PC-9 (cell line): ENCODE measurements at regions of chr2 and their contacts with region 1.

Region 1: GRCh38 chr2:177263451-177264208 is 897 bp downstream of the NFE2L2 start:
- DNase-seq: peak; percentile 97 to 100
- H3K4me3 ChIP-seq: peak overlapping the region; percentile 90
- H3K27ac ChIP-seq: peak overlapping the region; percentile 97
- H3K4me1 ChIP-seq: peaks cover 50% of the 10 kb centered on the region
- H3K27me3 ChIP-seq: no peaks in the 10 kb centered on the region
- CTCF ChIP-seq: peak; percentile 92

Region 2: GRCh38 chr2:176582990-176583481 is 680.6 kb before region 1 on chr2:
- CTCF ChIA-PET with region 1: no interaction called
- POLR2A ChIA-PET with region 1: interaction called, 4 read pairs
- intact Hi-C with region 1: loop called (anchors 5 kb)
- DNase-seq: peak; percentile 79 to 93
- H3K4me3 ChIP-seq: peak overlapping the region; percentile 25; the same call in 1 of the 2 replicates
- H3K27ac ChIP-seq: peak overlapping the region; percentile 86
- H3K4me1 ChIP-seq: peaks cover 30% of the 10 kb centered on the region
- H3K27me3 ChIP-seq: no peaks in the 10 kb centered on the region
- CTCF ChIP-seq: no peak

Region 3: GRCh38 chr2:177212106-177212890 is 51.3 kb before region 1 on chr2 and contains the start of gene HNRNPA3:
- CTCF ChIA-PET with region 1: no interaction called
- POLR2A ChIA-PET with region 1: interaction called, 5 read pairs
- intact Hi-C with region 1: loop called (anchors 1 kb)
- DNase-seq: peak; percentile 98 to 100
- H3K4me3 ChIP-seq: peak within 1 kb of the TSS; percentile 76
- H3K27ac ChIP-seq: peak within 1 kb of the TSS; percentile 97
- H3K4me1 ChIP-seq: peaks cover 30% of the 10 kb centered on the region
- H3K27me3 ChIP-seq: no peaks in the 10 kb centered on the region
- CTCF ChIP-seq: peak; percentile 27; the same call in 1 of the 2 replicates
- total RNA-seq, gene HNRNPA3: 245 and 290 TPM in 2 replicates

Region 4: GRCh38 chr2:177281400-177282180 is 18.0 kb after region 1 on chr2:
- CTCF ChIA-PET with region 1: interaction called, 4 read pairs
- POLR2A ChIA-PET with region 1: interaction called, 12 read pairs
- intact Hi-C with region 1: no loop called
- DNase-seq: no peak
- H3K4me3 ChIP-seq: no peak overlapping the region
- H3K27ac ChIP-seq: no peak overlapping the region
- H3K4me1 ChIP-seq: 0 out of 2 replicates have a peak, but pooled peaks cover 10% of the 10 kb centered on the region
- H3K27me3 ChIP-seq: no peaks in the 10 kb centered on the region
- CTCF ChIP-seq: no peak

Region 5: GRCh38 chr2:177332041-177332991 is 68.7 kb after region 1 on chr2:
- CTCF ChIA-PET with region 1: no interaction called
- POLR2A ChIA-PET with region 1: interaction called, 7 read pairs
- intact Hi-C with region 1: loop called (anchors 1 kb)
- DNase-seq: peak; percentile 58
- H3K4me3 ChIP-seq: no peak overlapping the region
- H3K27ac ChIP-seq: no peak overlapping the region
- H3K4me1 ChIP-seq: peaks cover 10% of the 10 kb centered on the region
- H3K27me3 ChIP-seq: no peaks in the 10 kb centered on the region
- CTCF ChIP-seq: peak; percentile 87

Region 6: GRCh38 chr2:177353187-177353478 is 89.5 kb after region 1 on chr2:
- CTCF ChIA-PET with region 1: no interaction called
- POLR2A ChIA-PET with region 1: no interaction called
- intact Hi-C with region 1: no loop called
- DNase-seq: no peak
- H3K4me3 ChIP-seq: no peak overlapping the region
- H3K27ac ChIP-seq: no peak overlapping the region
- H3K4me1 ChIP-seq: no peaks in the 10 kb centered on the region
- H3K27me3 ChIP-seq: no peaks in the 10 kb centered on the region
- CTCF ChIP-seq: no peak

Region 7: GRCh38 chr2:177397481-177398289 is 134.1 kb after region 1 on chr2:
- CTCF ChIA-PET with region 1: interaction called, 11 read pairs
- POLR2A ChIA-PET with region 1: interaction called, 4 read pairs
- intact Hi-C with region 1: loop called (anchors 2 kb)
- DNase-seq: peak; percentile 38 to 80
- H3K4me3 ChIP-seq: no peak overlapping the region
- H3K27ac ChIP-seq: peak overlapping the region; percentile 67
- H3K4me1 ChIP-seq: peaks cover 56% of the 10 kb centered on the region
- H3K27me3 ChIP-seq: no peaks in the 10 kb centered on the region
- CTCF ChIP-seq: no peak

Region 8: DNA sequence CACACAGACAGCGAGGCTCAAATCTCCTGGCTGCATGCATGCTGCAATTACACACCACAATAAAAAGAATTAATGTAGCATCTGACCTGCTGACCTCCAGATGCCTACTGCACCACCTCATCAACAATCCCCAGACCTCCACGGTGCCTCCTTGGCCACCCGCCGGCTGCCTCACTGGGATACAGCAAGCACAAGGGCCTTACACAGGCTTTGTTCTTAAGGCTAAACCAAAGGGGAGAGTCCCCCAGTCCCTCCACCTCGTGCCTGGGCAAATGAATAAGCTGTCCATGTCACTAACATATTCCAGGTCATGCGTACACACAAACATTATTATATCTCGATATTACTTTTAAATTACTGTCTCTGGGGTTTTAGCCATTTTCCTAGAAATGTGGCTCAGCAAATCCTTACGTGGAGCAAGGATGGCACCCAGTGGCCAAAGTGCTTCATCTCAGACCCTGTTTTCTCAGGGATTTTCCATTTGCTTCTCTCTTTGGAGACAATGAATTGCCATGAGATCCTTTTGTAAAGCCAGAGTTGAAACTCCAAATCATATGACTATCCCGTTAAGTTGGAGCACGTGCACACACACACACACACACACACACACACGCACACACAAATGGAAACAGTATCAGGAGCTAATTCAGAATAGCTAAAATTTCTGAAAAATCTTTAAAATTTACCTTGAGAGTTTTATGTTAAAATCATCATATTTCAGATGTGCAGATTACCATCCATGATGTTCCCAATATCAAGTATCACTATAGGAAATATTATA is 495.2 kb after region 1 on chr2:
- CTCF ChIA-PET with region 1: no interaction called
- POLR2A ChIA-PET with region 1: no interaction called
- intact Hi-C with region 1: loop called (anchors 5 kb)
- DNase-seq: peak in 1 of 2 experiments; percentile 53
- H3K4me3 ChIP-seq: no peak overlapping the region
- H3K27ac ChIP-seq: no peak overlapping the region
- H3K4me1 ChIP-seq: no peaks in the 10 kb centered on the region
- H3K27me3 ChIP-seq: no peaks in the 10 kb centered on the region
- CTCF ChIP-seq: peak; percentile 76